ENCODE measurements at regions of chr10 and their contacts with region 1.

Region 1: DNA sequence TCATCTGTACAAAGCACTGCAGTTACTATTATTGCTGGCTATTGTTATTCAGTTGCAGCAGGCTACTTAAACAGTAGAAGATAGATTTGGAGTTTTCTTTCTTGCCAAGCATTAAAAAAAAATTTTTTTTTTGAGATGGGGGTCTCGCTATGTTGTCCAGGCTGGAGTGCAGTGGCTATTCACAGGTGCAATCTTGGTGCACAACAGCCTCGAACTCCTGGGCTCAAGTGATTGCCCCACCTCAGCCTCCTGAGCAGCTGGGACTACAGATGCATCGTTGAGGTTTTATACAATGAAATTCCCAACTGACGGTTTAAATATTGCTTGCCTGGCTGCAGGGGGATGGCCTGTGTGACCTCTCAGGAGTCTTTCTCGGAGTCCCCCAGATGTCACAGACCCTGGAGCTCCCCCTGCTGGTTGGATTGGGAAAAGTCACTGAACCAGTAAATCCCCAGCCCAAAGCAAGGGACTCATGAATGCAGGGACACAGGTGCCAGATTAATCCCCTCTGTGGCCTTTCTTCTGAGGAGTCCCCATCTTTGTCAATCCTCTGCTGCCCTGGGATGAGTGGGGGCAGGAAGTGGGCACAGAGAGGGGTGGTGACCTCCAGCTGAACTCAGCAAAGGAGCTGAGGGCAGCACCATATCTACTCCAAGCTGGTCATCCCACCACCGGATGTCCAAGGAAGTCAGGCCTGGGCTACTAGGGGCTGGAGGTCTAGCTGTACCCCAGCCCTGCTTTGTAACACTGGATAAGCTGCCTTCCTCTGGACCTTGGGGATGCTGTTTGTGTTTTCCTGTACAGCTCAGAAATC is 149.6 kb downstream of the C10orf105 start:
- DNase-seq: peak; percentile 64 to 87 (median 75)
- ATAC-seq: no peak
- H3K4me3 ChIP-seq: no peak overlapping the region
- H3K4me3 Mint-ChIP-seq: no peak overlapping the region
- H3K27ac ChIP-seq: no peak overlapping the region
- H3K27ac Mint-ChIP-seq: no peak overlapping the region
- H3K4me1 ChIP-seq: no peaks in the 10 kb centered on the region
- H3K4me1 Mint-ChIP-seq: no peaks in the 10 kb centered on the region
- H3K27me3 ChIP-seq: no peaks in the 10 kb centered on the region
- H3K27me3 Mint-ChIP-seq: no peaks in the 10 kb centered on the region
- CTCF ChIP-seq: peak; percentile 85

Region 2: GRCh38 chr10:71314028-71314693 is 255.8 kb before region 1 on chr10:
- CTCF ChIA-PET with region 1: interaction called, 102 read pairs
- POLR2A ChIA-PET with region 1: interaction called, 6 read pairs
- intact Hi-C with region 1: loop called (anchors 1 kb)
- DNase-seq: peak in 8 of 9 experiments; percentile 41 to 80 (median 62)
- ATAC-seq: peak; percentile 45
- H3K4me3 ChIP-seq: no peak overlapping the region
- H3K4me3 Mint-ChIP-seq: no peak overlapping the region
- H3K27ac ChIP-seq: no peak overlapping the region
- H3K27ac Mint-ChIP-seq: no peak overlapping the region
- H3K4me1 ChIP-seq: peaks cover 6% of the 10 kb centered on the region
- H3K4me1 Mint-ChIP-seq: peaks cover 11% of the 10 kb centered on the region
- H3K27me3 ChIP-seq: no peaks in the 10 kb centered on the region
- H3K27me3 Mint-ChIP-seq: peaks cover 7% of the 10 kb centered on the region
- CTCF ChIP-seq: peak; percentile 86

Region 3: GRCh38 chr10:71383972-71384687 is 185.9 kb before region 1 on chr10:
- CTCF ChIA-PET with region 1: interaction called, 7 read pairs
- POLR2A ChIA-PET with region 1: no interaction called
- intact Hi-C with region 1: loop called (anchors 1 kb)
- DNase-seq: peak; percentile 56 to 83 (median 76)
- ATAC-seq: peak; percentile 89
- H3K4me3 ChIP-seq: no peak overlapping the region
- H3K4me3 Mint-ChIP-seq: no peak overlapping the region
- H3K27ac ChIP-seq: no peak overlapping the region
- H3K27ac Mint-ChIP-seq: no peak overlapping the region
- H3K4me1 ChIP-seq: no peaks in the 10 kb centered on the region
- H3K4me1 Mint-ChIP-seq: no peaks in the 10 kb centered on the region
- H3K27me3 ChIP-seq: peaks cover 0 to 3% of the 10 kb centered on the region in 2 experiments
- H3K27me3 Mint-ChIP-seq: no peaks in the 10 kb centered on the region
- CTCF ChIP-seq: peak; percentile 83

Region 4: DNA sequence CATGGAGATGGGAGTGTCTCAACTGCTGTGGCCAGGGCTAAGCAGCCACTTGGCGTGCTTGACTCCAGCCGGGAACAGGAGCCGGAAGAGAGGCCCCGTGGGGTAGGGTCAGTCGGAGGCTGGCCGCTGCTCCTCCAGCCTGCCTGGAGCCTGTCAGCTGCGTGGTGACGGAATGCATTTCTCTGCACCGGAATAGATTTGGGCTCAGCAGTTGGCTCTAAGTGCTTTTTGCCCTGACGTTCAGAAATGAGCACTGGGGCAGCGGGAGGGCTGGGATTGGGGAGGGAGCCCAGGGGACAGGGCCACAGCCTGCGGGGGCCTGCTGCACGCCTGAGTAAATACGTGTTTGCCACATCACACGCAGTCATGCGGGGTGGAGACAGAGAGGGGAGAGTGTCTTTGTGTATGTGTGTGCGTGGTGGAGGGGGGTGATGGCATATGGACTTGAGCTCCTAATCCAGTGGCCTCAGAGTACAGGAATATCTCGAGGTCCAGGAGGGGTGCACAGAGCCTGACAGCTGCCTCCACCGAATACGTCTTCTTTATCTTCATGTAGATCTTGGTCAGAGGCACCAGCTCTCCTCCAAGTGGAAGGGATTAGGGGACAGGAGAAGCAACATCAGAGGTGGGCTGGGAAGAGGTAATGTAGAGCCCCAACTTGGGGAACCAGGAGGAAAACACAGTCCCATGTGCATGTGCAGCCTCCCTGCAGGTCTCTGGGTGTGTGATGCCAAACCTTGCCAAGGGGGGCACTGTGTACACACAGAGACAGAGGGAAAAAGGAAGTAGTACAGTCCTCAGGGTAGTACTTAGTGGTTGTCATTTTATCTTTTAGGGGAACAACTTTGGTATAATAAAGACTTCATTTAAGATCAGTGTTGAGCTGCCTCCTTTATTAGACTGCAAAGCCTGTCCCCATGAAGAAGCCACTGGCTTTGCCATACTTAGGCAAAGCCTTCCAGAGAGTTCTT is 21.8 kb before region 1 on chr10:
- CTCF ChIA-PET with region 1: interaction called, 12 read pairs
- POLR2A ChIA-PET with region 1: interaction called, 3 read pairs
- intact Hi-C with region 1: no loop called
- DNase-seq: no peak
- ATAC-seq: no peak
- H3K4me3 ChIP-seq: no peak overlapping the region
- H3K4me3 Mint-ChIP-seq: no peak overlapping the region
- H3K27ac ChIP-seq: no peak overlapping the region
- H3K27ac Mint-ChIP-seq: no peak overlapping the region
- H3K4me1 ChIP-seq: no peaks in the 10 kb centered on the region
- H3K4me1 Mint-ChIP-seq: no peaks in the 10 kb centered on the region
- H3K27me3 ChIP-seq: no peaks in the 10 kb centered on the region
- H3K27me3 Mint-ChIP-seq: no peaks in the 10 kb centered on the region
- CTCF ChIP-seq: no peak

Region 5: GRCh38 chr10:71580415-71580814 is 10.4 kb after region 1 on chr10:
- CTCF ChIA-PET with region 1: interaction called, 16 read pairs
- POLR2A ChIA-PET with region 1: no interaction called
- intact Hi-C with region 1: no loop called
- DNase-seq: no peak
- ATAC-seq: no peak
- H3K4me3 ChIP-seq: no peak overlapping the region
- H3K4me3 Mint-ChIP-seq: no peak overlapping the region
- H3K27ac ChIP-seq: no peak overlapping the region
- H3K27ac Mint-ChIP-seq: no peak overlapping the region
- H3K4me1 ChIP-seq: no peaks in the 10 kb centered on the region
- H3K4me1 Mint-ChIP-seq: no peaks in the 10 kb centered on the region
- H3K27me3 ChIP-seq: no peaks in the 10 kb centered on the region
- H3K27me3 Mint-ChIP-seq: no peaks in the 10 kb centered on the region
- CTCF ChIP-seq: no peak

Measured in CD8-positive, alpha-beta T cell (primary cell).